ENCODE measurements at regions of chr15 and their contacts with region 1.

Region 1: DNA sequence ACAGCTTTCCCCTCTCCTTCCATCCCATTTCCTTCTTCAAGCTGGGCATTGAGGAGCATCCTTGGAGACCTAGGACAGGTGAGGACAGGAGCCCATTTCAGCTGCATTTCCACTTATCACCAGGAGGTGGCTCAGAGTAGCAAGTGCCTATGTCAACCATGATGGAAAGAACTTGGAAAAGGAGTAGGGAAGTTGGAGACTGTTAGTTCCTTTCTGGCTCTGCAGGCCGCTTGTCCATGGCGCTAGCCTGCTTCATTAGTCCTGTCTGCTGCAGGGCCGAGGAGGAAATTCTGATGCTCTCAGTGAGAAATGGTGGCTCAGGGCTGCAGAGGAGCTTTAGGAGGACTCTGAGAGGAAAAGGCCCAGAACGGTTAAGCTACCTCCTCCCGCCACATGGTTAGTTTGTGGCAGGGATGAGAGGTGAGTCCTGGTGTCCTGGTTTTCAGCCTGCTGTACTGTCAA is 7.0 kb upstream of the CD276 start:
- DNase-seq: peak; percentile 49
- H3K27ac ChIP-seq: no peak overlapping the region
- CTCF ChIP-seq: peak; percentile 77

Region 2: DNA sequence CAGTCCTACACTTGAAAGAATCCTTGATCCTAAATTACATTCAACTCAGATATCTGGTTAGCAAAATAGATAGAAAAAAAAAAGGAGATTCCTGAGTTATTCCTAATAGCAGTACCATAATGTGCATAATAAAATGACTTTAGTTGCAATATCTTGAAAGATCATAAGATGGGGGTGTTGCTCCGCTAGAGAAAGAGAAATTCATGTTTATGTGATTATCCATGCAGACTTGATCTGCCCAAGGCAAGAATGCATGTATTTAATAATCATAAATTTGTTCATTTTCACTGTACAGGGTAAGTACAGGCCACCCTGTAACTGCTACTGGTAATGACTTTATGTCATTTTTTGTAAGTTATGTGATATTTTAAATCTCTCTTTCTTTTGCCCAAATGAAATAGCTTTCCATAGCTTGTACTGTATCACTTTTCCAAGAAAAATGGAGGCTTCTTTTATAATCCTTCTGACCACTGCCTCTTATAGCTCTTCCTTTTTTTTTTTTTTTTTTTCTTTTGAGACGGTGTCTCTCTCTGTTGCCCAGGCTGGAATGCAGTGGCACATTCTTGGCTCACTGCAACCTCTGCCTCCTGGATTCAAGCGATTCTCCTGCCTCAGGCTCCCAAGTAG is 393.0 kb before region 1 on chr15:
- CTCF ChIA-PET with region 1: interaction called, 11 read pairs
- POLR2A ChIA-PET with region 1: no interaction called
- DNase-seq: peak; percentile 24
- H3K27ac ChIP-seq: no peak overlapping the region
- CTCF ChIP-seq: peak; percentile 21; the same call in 1 of the 2 replicates

Region 3: GRCh38 chr15:73560501-73561117 is 116.6 kb before region 1 on chr15:
- CTCF ChIA-PET with region 1: interaction called, 10 read pairs
- POLR2A ChIA-PET with region 1: no interaction called
- DNase-seq: peak; percentile 41
- H3K27ac ChIP-seq: no peak overlapping the region
- CTCF ChIP-seq: peak; percentile 50; the same call in 1 of the 2 replicates

Region 4: GRCh38 chr15:73697033-73697467 is 19.9 kb after region 1 on chr15:
- CTCF ChIA-PET with region 1: interaction called, 79 read pairs
- POLR2A ChIA-PET with region 1: no interaction called
- DNase-seq: peak; percentile 93
- H3K27ac ChIP-seq: peak overlapping the region; percentile 84
- CTCF ChIP-seq: no peak

Region 5: DNA sequence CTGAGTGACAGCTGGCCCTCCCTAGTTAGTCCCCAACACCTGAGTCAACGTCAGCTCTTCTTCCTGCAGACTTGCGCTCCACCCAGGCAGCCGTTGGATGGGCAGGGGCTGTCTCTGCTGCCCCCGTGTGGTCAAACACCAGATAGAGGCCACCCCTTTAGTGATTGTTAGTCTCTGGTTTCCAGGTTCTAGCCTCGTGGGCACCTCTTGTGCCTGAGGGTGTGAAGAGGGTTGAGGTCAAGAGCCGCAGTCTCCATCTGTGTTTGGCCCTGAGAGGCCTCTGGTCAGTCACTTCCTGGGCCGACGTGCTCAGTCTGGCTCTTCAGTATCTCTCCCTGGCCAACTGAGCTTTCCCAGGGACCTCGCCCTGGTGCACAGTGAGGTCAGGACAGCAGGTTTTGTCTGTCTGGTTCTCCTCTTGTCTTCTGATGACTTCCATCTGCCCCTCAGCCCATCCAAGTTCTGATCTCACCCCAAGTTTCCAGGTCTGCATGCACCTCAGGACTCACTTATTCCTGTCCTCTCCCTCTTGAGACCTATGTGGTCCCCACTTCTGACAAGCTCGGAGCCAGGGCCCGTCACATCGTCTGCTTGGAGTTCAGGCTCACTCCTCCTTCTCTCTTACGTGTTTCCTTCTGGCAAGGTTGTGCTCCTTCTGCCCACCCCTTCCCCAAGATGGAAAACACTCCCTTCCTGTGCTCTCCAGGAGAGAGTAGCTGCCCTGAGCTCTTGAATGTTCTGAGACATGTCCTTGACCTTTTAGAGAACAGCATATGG is 27.9 kb after region 1 on chr15:
- CTCF ChIA-PET with region 1: interaction called, 79 read pairs
- POLR2A ChIA-PET with region 1: no interaction called
- DNase-seq: peak; percentile 63
- H3K27ac ChIP-seq: peak overlapping the region; percentile 4; the same call in 1 of the 2 replicates
- CTCF ChIP-seq: peak; percentile 88

Region 6: DNA sequence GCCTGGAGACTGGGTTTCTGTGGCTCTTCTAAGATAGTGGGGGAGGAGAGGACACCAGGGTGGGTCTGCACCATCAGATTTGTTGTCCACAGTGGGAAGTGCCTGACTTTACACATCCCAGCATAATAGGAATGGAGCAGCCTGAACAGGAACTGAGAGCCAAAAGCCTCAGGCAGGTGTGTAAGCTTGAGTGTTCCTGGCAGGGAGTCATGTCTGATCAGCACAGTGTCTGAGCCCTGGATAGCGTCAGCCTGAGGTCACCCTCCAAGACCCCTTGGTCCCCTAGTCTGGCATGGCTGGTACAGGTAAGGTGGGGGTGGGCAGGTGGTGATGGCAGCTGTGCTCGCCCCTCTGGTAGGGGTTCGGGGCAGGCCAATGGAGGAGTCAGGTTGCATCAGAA is 55.8 kb after region 1 on chr15:
- CTCF ChIA-PET with region 1: no interaction called
- POLR2A ChIA-PET with region 1: no interaction called
- DNase-seq: no peak
- H3K27ac ChIP-seq: no peak overlapping the region
- CTCF ChIP-seq: no peak